ENCODE measurements at regions of chrX and their contacts with region 1.

Region 1: GRCh38 chrX:109485470-109486340 is 3.8 kb upstream of the GUCY2F start:
- DNase-seq: peak; percentile 10 to 76 (median 55)
- ATAC-seq: peak; percentile 69
- H3K4me3 ChIP-seq: no peak overlapping the region
- H3K4me3 Mint-ChIP-seq: no peak overlapping the region
- H3K27ac ChIP-seq: no peak overlapping the region
- H3K27ac Mint-ChIP-seq: no peak overlapping the region
- H3K4me1 ChIP-seq: no peaks in the 10 kb centered on the region
- H3K4me1 Mint-ChIP-seq: no peaks in the 10 kb centered on the region
- H3K27me3 ChIP-seq: no peaks in the 10 kb centered on the region
- H3K27me3 Mint-ChIP-seq: peaks cover 7% of the 10 kb centered on the region
- CTCF ChIP-seq: peak; percentile 92

Region 2: GRCh38 chrX:109475174-109475891 is 10.4 kb before region 1 on chrX:
- CTCF ChIA-PET with region 1: interaction called, 16 read pairs
- POLR2A ChIA-PET with region 1: no interaction called
- intact Hi-C with region 1: no loop called
- DNase-seq: peak in 2 of 9 experiments; percentile 5 to 6
- ATAC-seq: no peak
- H3K4me3 ChIP-seq: no peak overlapping the region
- H3K4me3 Mint-ChIP-seq: no peak overlapping the region
- H3K27ac ChIP-seq: no peak overlapping the region
- H3K27ac Mint-ChIP-seq: no peak overlapping the region
- H3K4me1 ChIP-seq: no peaks in the 10 kb centered on the region
- H3K4me1 Mint-ChIP-seq: peaks cover 4% of the 10 kb centered on the region
- H3K27me3 ChIP-seq: no peaks in the 10 kb centered on the region
- H3K27me3 Mint-ChIP-seq: peaks cover 6% of the 10 kb centered on the region
- CTCF ChIP-seq: no peak

Region 3: GRCh38 chrX:109536439-109537336 is 51.0 kb after region 1 on chrX and contains the start of gene NXT2:
- CTCF ChIA-PET with region 1: no interaction called
- POLR2A ChIA-PET with region 1: interaction called, 4 read pairs
- intact Hi-C with region 1: loop called in 1 of 2 experiments (anchors 10 kb)
- DNase-seq: peak; percentile 68 to 93 (median 84)
- ATAC-seq: peak; percentile 98
- H3K4me3 ChIP-seq: peak within 1 kb of the TSS; percentile 74 to 80
- H3K4me3 Mint-ChIP-seq: peak within 1 kb of the TSS; percentile 96
- H3K27ac ChIP-seq: peak within 1 kb of the TSS; percentile 72 to 91
- H3K27ac Mint-ChIP-seq: peak within 1 kb of the TSS; percentile 98
- H3K4me1 ChIP-seq: no peaks in the 10 kb centered on the region
- H3K4me1 Mint-ChIP-seq: peaks cover 17% of the 10 kb centered on the region
- H3K27me3 ChIP-seq: no peaks in the 10 kb centered on the region
- H3K27me3 Mint-ChIP-seq: peaks cover 13% of the 10 kb centered on the region
- CTCF ChIP-seq: no peak
- total RNA-seq, gene NXT2: 4.5 to 4.6 TPM

Region 4: GRCh38 chrX:109635176-109635575 is 149.5 kb after region 1 on chrX:
- CTCF ChIA-PET with region 1: interaction called, 5 read pairs
- POLR2A ChIA-PET with region 1: no interaction called
- intact Hi-C with region 1: loop called (anchors 2 kb)
- DNase-seq: peak in 2 of 9 experiments; percentile 12 to 25
- ATAC-seq: no peak
- H3K4me3 ChIP-seq: no peak overlapping the region
- H3K4me3 Mint-ChIP-seq: no peak overlapping the region
- H3K27ac ChIP-seq: no peak overlapping the region
- H3K27ac Mint-ChIP-seq: no peak overlapping the region
- H3K4me1 ChIP-seq: no peaks in the 10 kb centered on the region
- H3K4me1 Mint-ChIP-seq: no peaks in the 10 kb centered on the region
- H3K27me3 ChIP-seq: no peaks in the 10 kb centered on the region
- H3K27me3 Mint-ChIP-seq: no peaks in the 10 kb centered on the region
- CTCF ChIP-seq: no peak

Region 5: DNA sequence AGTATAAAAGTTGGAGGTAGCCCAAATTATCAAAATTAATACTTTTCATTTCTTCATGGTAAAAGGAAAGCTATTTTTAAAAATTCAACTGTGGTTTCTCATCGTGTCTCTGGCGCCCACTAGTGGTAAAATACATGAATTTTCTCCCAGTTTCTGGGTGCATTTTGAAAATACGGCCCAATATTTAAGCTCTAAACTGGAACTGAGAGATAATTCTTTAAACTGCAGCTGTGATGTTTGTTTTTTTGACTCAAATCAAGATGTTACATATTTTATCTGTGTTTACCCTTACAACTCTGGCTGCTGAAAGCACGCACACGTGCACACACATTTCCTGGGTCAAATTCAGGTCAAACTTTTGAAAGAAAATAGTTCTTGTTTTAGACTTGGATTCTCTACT is 371.3 kb after region 1 on chrX:
- CTCF ChIA-PET with region 1: interaction called, 19 read pairs
- POLR2A ChIA-PET with region 1: no interaction called
- intact Hi-C with region 1: loop called (anchors 2 to 5 kb)
- DNase-seq: peak in 3 of 9 experiments; percentile 11 to 56 (median 43)
- ATAC-seq: no peak
- H3K4me3 ChIP-seq: no peak overlapping the region
- H3K4me3 Mint-ChIP-seq: no peak overlapping the region
- H3K27ac ChIP-seq: no peak overlapping the region
- H3K27ac Mint-ChIP-seq: no peak overlapping the region
- H3K4me1 ChIP-seq: no peaks in the 10 kb centered on the region
- H3K4me1 Mint-ChIP-seq: no peaks in the 10 kb centered on the region
- H3K27me3 ChIP-seq: no peaks in the 10 kb centered on the region
- H3K27me3 Mint-ChIP-seq: no peaks in the 10 kb centered on the region
- CTCF ChIP-seq: peak; percentile 72

Region 6: GRCh38 chrX:109890895-109891502 is 405.3 kb after region 1 on chrX:
- CTCF ChIA-PET with region 1: interaction called, 3 read pairs
- POLR2A ChIA-PET with region 1: no interaction called
- intact Hi-C with region 1: loop called (anchors 2 kb)
- DNase-seq: peak in 8 of 9 experiments; percentile 1 to 64 (median 38)
- ATAC-seq: peak; percentile 70
- H3K4me3 ChIP-seq: no peak overlapping the region
- H3K4me3 Mint-ChIP-seq: no peak overlapping the region
- H3K27ac ChIP-seq: no peak overlapping the region
- H3K27ac Mint-ChIP-seq: no peak overlapping the region
- H3K4me1 ChIP-seq: no peaks in the 10 kb centered on the region
- H3K4me1 Mint-ChIP-seq: no peaks in the 10 kb centered on the region
- H3K27me3 ChIP-seq: no peaks in the 10 kb centered on the region
- H3K27me3 Mint-ChIP-seq: peaks cover 3% of the 10 kb centered on the region
- CTCF ChIP-seq: peak; percentile 65

Measured in CD8-positive, alpha-beta T cell (primary cell).